ENCODE measurements at regions of chr21 and their contacts with region 1.

Region 1: GRCh38 chr21:36747815-36748383 is 49.0 kb downstream of the SIM2 start:
- DNase-seq: peak; percentile 92
- H3K4me3 ChIP-seq: peak overlapping the region in 1 of 2 experiments; percentile 51; a peak in 3 of 4 replicates
- H3K27ac ChIP-seq: no peak overlapping the region
- H3K4me1 ChIP-seq: peaks cover 7 to 14% of the 10 kb centered on the region in 2 experiments; a peak in 1 of 4 replicates
- H3K27me3 ChIP-seq: no peaks in the 10 kb centered on the region; the same call in 1 of the 2 replicates
- CTCF ChIP-seq: no peak
- EP300 ChIP-seq: no peak
- RAD21 ChIP-seq: peak; percentile 14; the same call in 1 of the 2 replicates

Region 2: GRCh38 chr21:35257413-35257812 is 1490.5 kb before region 1 on chr21:
- CTCF ChIA-PET with region 1: no interaction called
- POLR2A ChIA-PET with region 1: no interaction called
- DNase-seq: no peak
- H3K4me3 ChIP-seq: peak overlapping the region in 1 of 2 experiments; percentile 39; a peak in 1 of 4 replicates
- H3K27ac ChIP-seq: peak overlapping the region; percentile 72 to 90
- H3K4me1 ChIP-seq: peaks cover 6% of the 10 kb centered on the region in 2 experiments; a peak in 3 of 4 replicates
- H3K27me3 ChIP-seq: no peaks in the 10 kb centered on the region
- CTCF ChIP-seq: no peak
- EP300 ChIP-seq: peak in 1 of 2 experiments; percentile 78; a peak in 1 of 4 replicates
- RAD21 ChIP-seq: no peak

Region 3: GRCh38 chr21:36735724-36736325 is 12.1 kb before region 1 on chr21:
- CTCF ChIA-PET with region 1: interaction called, 11 read pairs
- POLR2A ChIA-PET with region 1: interaction called, 3 read pairs
- DNase-seq: peak; percentile 41
- H3K4me3 ChIP-seq: no peak overlapping the region
- H3K27ac ChIP-seq: no peak overlapping the region
- H3K4me1 ChIP-seq: peaks cover 0 to 5% of the 10 kb centered on the region in 2 experiments; a peak in 1 of 4 replicates
- H3K27me3 ChIP-seq: peaks cover 8% of the 10 kb centered on the region
- CTCF ChIP-seq: no peak
- EP300 ChIP-seq: no peak
- RAD21 ChIP-seq: no peak

Region 4: DNA sequence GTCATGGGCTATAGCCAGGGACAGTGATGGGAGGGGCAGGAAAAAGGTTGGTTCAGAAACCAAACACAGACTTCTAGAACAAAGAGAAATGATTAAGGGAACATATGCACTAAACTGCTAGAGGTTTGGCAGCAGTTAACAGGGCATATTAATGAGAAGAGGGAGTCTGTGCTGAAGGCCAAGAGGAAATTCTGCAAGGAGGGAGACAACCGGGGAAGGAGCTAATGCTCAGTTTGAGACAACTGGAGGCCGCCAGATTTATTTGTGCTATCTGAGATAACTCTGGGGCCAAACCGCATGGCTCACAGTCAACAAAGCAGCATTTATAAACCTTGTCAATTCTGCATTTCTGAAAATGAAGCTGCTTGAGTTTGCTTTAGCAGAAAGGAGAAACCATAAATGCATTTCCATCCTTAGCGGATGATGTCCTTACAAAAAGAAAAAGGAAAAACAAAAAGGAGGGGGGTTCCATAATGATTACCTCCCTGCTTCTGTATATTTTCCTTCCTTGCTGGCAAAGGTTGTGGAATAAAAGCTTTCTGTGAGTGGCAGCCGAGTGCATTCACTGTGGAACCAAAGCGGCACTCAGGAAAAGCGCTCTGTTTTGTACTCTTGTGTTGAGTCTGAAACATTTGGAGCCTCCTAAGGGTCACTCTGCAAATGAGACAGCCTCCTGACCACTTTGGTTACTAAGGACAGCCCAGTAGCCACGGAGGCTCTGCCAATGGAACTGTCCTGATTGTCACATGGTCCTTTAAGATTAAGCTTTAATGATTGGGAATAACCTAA is 21.3 kb after region 1 on chr21:
- CTCF ChIA-PET with region 1: interaction called, 22 read pairs
- POLR2A ChIA-PET with region 1: interaction called, 4 read pairs
- DNase-seq: no peak
- H3K4me3 ChIP-seq: no peak overlapping the region
- H3K27ac ChIP-seq: no peak overlapping the region
- H3K4me1 ChIP-seq: peaks cover 0 to 5% of the 10 kb centered on the region in 2 experiments; a peak in 1 of 4 replicates
- H3K27me3 ChIP-seq: no peaks in the 10 kb centered on the region
- CTCF ChIP-seq: no peak
- EP300 ChIP-seq: no peak
- RAD21 ChIP-seq: no peak

Region 5: GRCh38 chr21:36854391-36854790 is 106.5 kb after region 1 on chr21:
- CTCF ChIA-PET with region 1: interaction called, 13 read pairs
- POLR2A ChIA-PET with region 1: no interaction called
- DNase-seq: peak; percentile 68
- H3K4me3 ChIP-seq: no peak overlapping the region; a peak in 1 of 4 replicates
- H3K27ac ChIP-seq: no peak overlapping the region
- H3K4me1 ChIP-seq: peaks cover 6% of the 10 kb centered on the region in 2 experiments; a peak in 2 of 4 replicates
- H3K27me3 ChIP-seq: no peaks in the 10 kb centered on the region
- CTCF ChIP-seq: peak; percentile 71
- EP300 ChIP-seq: no peak
- RAD21 ChIP-seq: peak; percentile 71

Measured in SK-N-SH (cell line).